Activated CD4-positive, alpha-beta T cell treated with anti-CD3 and anti-CD28 coated beads for 36 hours (primary cell): ENCODE measurements at regions of chr14 and their contacts with region 1.

Region 1: DNA sequence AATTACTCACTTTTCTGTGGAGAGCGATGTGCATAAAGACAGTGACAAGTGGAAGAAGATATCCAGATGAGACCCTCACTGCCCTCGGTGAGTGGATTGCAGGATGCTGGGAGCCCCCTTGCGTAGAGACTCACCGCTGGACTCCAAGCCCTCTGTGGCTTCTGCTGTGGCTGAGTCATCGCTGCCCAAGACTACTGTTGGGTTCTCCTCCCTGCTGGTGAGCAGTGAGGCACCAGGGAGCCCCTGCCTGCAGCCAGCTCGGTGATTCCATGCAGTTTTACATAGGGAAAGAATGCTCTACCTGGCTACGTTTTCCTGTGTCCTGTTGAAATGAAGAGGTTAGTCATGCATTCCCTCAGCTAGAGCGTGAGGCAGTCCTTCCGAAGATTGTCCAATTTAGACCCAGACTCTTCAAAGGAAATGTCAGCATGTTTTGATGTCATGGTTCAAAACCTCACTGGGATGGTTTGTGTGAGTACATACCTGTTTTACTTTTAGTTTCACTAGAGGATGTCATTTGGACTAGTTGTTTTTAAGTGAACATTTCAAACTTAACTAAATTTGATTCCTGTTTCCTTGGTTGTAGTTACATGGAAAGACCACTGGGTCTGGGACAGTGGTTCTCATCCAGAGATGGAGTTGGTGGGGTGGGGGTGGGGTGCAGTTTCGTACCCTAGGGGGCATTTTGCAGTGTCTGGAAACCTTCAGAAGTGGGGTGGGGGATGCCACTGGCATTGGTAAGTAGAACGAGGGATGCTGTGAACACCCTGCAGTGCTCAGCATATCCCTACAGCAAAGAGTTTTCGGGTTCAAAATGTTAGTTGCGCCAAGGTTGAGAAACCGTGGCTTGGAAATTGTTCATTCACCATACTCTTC is 28.4 kb downstream of the TRAF3 start:
- DNase-seq: peak; percentile 76
- ATAC-seq: peak; percentile 57
- H3K4me3 Mint-ChIP-seq: peak overlapping the region; percentile 65
- H3K27ac Mint-ChIP-seq: peak overlapping the region; percentile 96
- H3K4me1 Mint-ChIP-seq: peaks cover 78% of the 10 kb centered on the region
- H3K27me3 Mint-ChIP-seq: no peaks in the 10 kb centered on the region

Region 2: DNA sequence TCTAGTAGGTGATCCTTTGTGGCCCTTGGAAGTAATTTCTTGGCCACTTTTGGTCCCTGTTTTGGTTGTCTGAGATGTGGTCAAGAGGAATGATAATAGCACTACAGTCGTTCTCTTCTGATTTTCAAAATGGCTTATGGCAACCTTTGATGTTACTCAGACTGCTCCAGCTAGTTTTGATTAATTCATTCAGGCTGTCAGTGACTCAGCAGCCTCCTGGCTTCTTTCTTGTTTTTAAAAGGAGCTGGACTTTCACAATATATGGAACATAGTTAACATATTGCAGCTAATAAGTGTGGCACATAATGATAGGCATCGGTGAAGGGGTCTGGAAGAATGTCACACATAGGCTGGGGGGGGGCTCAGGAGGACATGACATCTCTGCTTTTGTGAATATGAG is 618.6 kb before region 1 on chr14:
- CTCF ChIA-PET with region 1: no interaction called
- POLR2A ChIA-PET with region 1: no interaction called
- intact Hi-C with region 1: loop called in 1 of 2 experiments (anchors 10 kb)
- DNase-seq: no peak
- ATAC-seq: no peak
- H3K4me3 Mint-ChIP-seq: no peak overlapping the region
- H3K27ac Mint-ChIP-seq: peak overlapping the region; percentile 79
- H3K4me1 Mint-ChIP-seq: peaks cover 61% of the 10 kb centered on the region
- H3K27me3 Mint-ChIP-seq: no peaks in the 10 kb centered on the region

Region 3: GRCh38 chr14:102795060-102795925 is 10.3 kb before region 1 on chr14:
- CTCF ChIA-PET with region 1: interaction called, 6 read pairs
- POLR2A ChIA-PET with region 1: no interaction called
- intact Hi-C with region 1: loop called (anchors 1 kb)
- DNase-seq: peak; percentile 67
- ATAC-seq: peak; percentile 80
- H3K4me3 Mint-ChIP-seq: no peak overlapping the region
- H3K27ac Mint-ChIP-seq: peak overlapping the region; percentile 72
- H3K4me1 Mint-ChIP-seq: peaks cover 84% of the 10 kb centered on the region
- H3K27me3 Mint-ChIP-seq: no peaks in the 10 kb centered on the region

Region 4: GRCh38 chr14:102819176-102819628 is 13.6 kb after region 1 on chr14:
- CTCF ChIA-PET with region 1: interaction called, 40 read pairs
- POLR2A ChIA-PET with region 1: interaction called, 21 read pairs
- intact Hi-C with region 1: loop called (anchors 1 kb)
- DNase-seq: peak; percentile 91
- ATAC-seq: peak; percentile 74
- H3K4me3 Mint-ChIP-seq: peak overlapping the region; percentile 61
- H3K27ac Mint-ChIP-seq: peak overlapping the region; percentile 94
- H3K4me1 Mint-ChIP-seq: peaks cover 87% of the 10 kb centered on the region
- H3K27me3 Mint-ChIP-seq: no peaks in the 10 kb centered on the region

Region 5: GRCh38 chr14:102882226-102882906 is 76.8 kb after region 1 on chr14:
- CTCF ChIA-PET with region 1: no interaction called
- POLR2A ChIA-PET with region 1: no interaction called
- intact Hi-C with region 1: loop called in 1 of 2 experiments (anchors 1 kb)
- DNase-seq: no peak
- ATAC-seq: no peak
- H3K4me3 Mint-ChIP-seq: no peak overlapping the region
- H3K27ac Mint-ChIP-seq: peak overlapping the region; percentile 66
- H3K4me1 Mint-ChIP-seq: peaks cover 28% of the 10 kb centered on the region
- H3K27me3 Mint-ChIP-seq: no peaks in the 10 kb centered on the region